ENCODE measurements at regions of chr11 and their contacts with region 1.

Region 1: GRCh38 chr11:72430741-72431570 is 3.4 kb downstream of the CLPB start:
- DNase-seq: peak; percentile 64
- ATAC-seq: peak; percentile 42
- H3K4me3 Mint-ChIP-seq: peak overlapping the region; percentile 14
- H3K27ac Mint-ChIP-seq: peak overlapping the region; percentile 68
- H3K4me1 Mint-ChIP-seq: peaks cover 29% of the 10 kb centered on the region
- H3K27me3 Mint-ChIP-seq: no peaks in the 10 kb centered on the region

Region 2: GRCh38 chr11:72030472-72031045 is 400.4 kb before region 1 on chr11:
- CTCF ChIA-PET with region 1: interaction called, 7 read pairs
- POLR2A ChIA-PET with region 1: no interaction called
- intact Hi-C with region 1: loop called (anchors 5 to 10 kb)
- DNase-seq: no peak
- ATAC-seq: no peak
- H3K4me3 Mint-ChIP-seq: no peak overlapping the region
- H3K27ac Mint-ChIP-seq: peak overlapping the region; percentile 43
- H3K4me1 Mint-ChIP-seq: peaks cover 50% of the 10 kb centered on the region
- H3K27me3 Mint-ChIP-seq: no peaks in the 10 kb centered on the region

Region 3: DNA sequence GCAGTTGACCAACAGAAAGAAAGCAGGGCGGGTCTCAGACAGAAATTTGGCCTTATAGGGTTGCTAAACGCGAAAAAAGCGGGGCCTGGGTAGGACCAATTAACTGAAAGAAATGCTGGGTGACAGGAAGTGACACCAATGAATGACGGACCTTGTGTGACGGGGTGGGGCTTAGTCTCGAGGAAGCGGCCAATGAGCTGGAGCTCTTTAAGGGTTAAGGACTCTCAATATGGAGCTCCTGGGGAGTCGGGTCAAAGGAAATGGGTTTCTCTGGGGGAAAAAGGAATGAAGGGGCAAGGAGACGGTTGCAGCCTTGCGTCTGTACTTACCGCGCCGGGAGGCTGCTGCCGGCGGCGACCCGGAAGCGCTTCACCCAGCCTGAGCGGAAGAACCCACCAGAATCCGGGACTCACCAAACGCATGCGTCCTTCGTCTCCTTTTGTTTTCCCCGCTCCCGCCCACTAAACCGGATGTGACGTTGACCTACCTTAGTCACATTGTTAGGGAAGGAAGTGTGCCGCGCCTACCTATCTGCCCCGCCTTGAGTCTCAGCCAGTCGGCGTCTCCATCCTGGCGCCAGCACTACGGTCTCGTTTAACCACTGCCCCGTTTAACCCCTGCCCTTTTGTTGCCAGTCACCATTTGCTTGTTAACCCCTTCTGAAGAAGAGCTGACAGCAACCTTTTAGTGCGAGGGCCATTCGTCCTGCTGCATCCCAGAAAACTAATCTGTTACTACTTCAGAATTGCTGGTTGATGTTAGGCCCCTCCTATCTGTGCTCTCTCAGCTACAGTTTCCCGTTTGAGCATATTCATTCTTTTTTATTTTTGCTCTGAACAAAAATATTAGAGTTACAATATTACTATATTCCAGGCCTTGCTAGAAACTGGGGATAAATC is 318.4 kb before region 1 on chr11 and contains the start of gene ANAPC15:
- CTCF ChIA-PET with region 1: interaction called, 4 read pairs
- POLR2A ChIA-PET with region 1: interaction called, 7 read pairs
- intact Hi-C with region 1: loop called in 1 of 2 experiments (anchors 1 kb)
- DNase-seq: peak; percentile 100
- ATAC-seq: peak; percentile 89
- H3K4me3 Mint-ChIP-seq: peak within 1 kb of the TSS; percentile 92
- H3K27ac Mint-ChIP-seq: peak within 1 kb of the TSS; percentile 98
- H3K4me1 Mint-ChIP-seq: peaks cover 16% of the 10 kb centered on the region
- H3K27me3 Mint-ChIP-seq: no peaks in the 10 kb centered on the region
- total RNA-seq, gene ANAPC15: 60.3 to 76.1 TPM

Region 4: GRCh38 chr11:72328366-72329224 is 102.4 kb before region 1 on chr11:
- CTCF ChIA-PET with region 1: interaction called, 22 read pairs
- POLR2A ChIA-PET with region 1: interaction called, 4 read pairs
- intact Hi-C with region 1: loop called (anchors 1 to 5 kb)
- DNase-seq: no peak
- ATAC-seq: no peak
- H3K4me3 Mint-ChIP-seq: no peak overlapping the region
- H3K27ac Mint-ChIP-seq: no peak overlapping the region
- H3K4me1 Mint-ChIP-seq: peaks cover 25% of the 10 kb centered on the region
- H3K27me3 Mint-ChIP-seq: no peaks in the 10 kb centered on the region

Region 5: DNA sequence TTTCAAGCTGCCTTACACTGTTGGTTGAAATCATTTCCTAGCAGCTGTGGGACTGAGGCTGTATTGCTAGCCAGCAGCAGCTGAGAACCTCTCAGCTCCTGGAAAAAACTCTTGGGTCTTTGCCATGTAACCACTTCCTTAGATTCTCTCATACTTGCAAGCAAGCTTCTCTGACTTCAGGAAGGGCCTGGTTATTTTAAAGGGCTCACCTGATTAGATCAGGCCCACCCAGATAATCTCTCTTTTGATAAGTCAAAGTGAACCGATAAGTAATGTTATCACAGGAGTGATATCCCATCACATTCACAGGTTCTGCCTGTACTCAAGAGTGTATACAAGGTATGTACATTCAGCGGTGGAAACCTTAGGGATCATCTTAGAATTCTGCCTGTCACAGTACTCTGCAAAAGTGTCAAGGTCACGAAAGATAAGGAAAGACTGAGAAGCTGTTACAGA is 10.8 kb after region 1 on chr11:
- CTCF ChIA-PET with region 1: interaction called, 17 read pairs
- POLR2A ChIA-PET with region 1: no interaction called
- intact Hi-C with region 1: no loop called
- DNase-seq: no peak
- ATAC-seq: no peak
- H3K4me3 Mint-ChIP-seq: no peak overlapping the region
- H3K27ac Mint-ChIP-seq: no peak overlapping the region
- H3K4me1 Mint-ChIP-seq: peaks cover 6% of the 10 kb centered on the region
- H3K27me3 Mint-ChIP-seq: peaks cover 3% of the 10 kb centered on the region

Region 6: DNA sequence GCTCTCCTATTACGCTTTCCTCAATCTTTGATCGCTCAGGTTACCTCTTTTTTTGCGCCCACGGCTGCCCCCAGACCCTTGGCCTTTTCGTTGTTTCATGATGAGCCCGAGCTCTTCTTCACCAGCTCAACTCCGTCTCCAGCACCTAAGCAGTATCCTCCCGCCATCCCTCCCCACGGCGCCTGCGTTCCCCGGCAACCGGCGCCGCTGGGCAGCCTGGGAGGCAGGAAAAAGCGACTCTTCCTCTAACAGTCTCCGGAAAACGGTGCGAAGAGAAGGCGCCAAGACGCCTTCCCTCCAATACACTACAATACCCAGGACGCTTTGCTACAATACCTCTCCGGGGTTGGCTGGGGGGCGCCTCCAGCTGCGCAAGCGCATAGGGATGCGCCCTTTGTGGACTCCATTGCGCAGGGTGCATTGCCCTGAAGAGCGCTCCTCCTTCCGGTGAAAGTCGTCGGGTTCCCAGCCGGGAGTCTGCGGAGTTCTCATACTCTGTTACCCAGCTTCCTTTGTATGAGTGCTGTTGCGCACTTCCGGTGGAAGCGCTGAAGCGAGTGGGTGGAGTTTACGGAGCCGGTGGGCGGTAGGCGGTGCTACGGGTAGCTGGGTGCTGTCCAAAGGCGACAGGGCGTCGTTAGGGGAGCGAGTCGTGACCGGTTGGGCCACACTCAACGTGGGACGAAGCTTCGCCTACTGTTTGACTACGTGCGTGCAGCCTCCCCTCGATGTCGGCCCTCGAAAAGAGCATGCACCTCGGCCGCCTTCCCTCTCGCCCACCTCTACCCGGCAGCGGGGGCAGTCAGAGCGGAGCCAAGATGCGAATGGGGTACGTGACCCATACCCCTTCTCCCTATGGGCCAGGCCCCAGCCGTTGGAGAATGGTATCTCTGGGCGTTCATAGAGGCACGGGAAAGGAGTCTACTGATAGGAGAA is 1740.0 kb after region 1 on chr11 and contains the starts of genes C2CD3 and PPME1:
- CTCF ChIA-PET with region 1: no interaction called
- POLR2A ChIA-PET with region 1: no interaction called
- intact Hi-C with region 1: loop called in 1 of 2 experiments (anchors 5 kb)
- DNase-seq: peak; percentile 98
- ATAC-seq: peak; percentile 96
- H3K4me3 Mint-ChIP-seq: no peak within 1 kb of the TSS
- H3K27ac Mint-ChIP-seq: no peak within 1 kb of the TSS
- H3K4me1 Mint-ChIP-seq: peaks cover 16% of the 10 kb centered on the region
- H3K27me3 Mint-ChIP-seq: no peaks in the 10 kb centered on the region
- total RNA-seq, gene C2CD3: 23.9 to 28.0 TPM
- total RNA-seq, gene PPME1: 54.2 to 61.5 TPM